ENCODE measurements at regions of chr15 and their contacts with region 1.

Region 1: DNA sequence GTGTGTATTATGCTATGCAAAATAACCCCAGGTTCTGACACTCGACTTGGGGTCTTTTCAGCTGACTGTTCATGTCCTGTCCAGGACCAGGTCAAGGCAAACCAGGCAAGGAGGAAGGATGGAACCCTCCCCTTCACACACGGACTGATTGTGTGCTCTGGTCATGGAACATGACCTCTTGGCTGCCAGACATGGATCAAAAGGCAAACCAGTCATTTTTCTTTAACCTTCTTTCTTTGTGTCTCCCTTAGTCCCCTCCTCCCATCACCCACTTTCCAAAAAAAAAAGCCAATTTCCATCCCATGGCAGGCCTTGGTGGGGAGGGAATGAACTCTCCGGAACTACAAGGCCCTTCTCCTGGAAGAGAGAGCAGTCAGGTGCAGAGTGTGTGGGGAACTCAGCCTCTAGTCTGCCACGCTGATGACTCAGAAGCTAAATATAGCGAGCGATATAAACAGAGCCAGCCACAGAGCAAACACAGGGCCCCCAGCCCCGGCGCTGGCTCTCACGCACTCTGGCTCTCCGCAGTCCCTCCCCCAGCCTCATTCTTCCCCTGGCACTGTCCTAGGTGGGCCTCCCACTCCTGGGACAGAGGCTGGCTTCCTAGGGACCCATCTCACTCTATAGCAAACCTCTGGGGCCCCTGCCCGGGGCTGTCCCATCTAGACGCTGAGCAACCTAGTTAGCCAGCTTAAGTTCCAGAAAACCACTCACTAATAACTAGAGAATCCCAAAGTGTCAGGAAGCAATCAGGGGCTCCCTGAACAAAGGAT is 10.0 kb downstream of the BMF start:
- DNase-seq: peak; percentile 87
- ATAC-seq: peak; percentile 95
- H3K4me3 Mint-ChIP-seq: peak overlapping the region; percentile 44
- H3K27ac Mint-ChIP-seq: peak overlapping the region; percentile 97
- H3K4me1 Mint-ChIP-seq: peaks cover 72% of the 10 kb centered on the region
- H3K27me3 Mint-ChIP-seq: peaks cover 3% of the 10 kb centered on the region
- CTCF ChIP-seq: no peak

Region 2: DNA sequence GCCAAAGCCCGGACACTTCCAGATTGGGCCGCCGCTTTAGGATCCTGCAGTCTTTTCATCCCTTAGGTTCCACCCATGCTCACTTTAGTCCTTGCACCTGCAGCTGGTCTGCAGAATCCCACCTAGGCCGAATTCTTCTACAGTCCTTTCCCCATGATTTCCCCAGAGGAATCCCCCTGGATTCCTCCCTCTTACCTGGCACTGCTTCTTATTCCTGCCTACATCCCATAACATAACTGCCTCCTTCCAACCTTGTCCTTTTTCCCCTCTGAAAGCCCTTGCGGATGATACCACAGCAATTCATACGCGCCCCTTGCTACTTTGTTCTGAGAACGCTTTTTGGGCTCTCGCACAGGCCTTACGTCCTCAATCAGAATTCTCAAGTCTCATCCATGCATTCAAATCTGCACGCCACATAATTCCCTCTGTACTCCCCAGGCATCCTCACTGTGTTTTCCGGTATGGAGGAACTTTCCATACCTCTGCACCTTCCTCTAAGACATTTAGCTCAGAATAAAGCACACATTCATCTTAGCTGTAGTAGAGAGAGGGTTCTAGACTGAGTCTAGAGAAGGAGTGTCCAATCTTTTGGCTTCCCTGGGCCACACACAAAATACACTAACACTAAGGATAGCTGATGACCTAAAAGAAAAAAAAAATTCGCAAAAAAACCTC is 164.1 kb before region 1 on chr15:
- CTCF ChIA-PET with region 1: no interaction called
- POLR2A ChIA-PET with region 1: no interaction called
- intact Hi-C with region 1: no loop called
- DNase-seq: peak; percentile 11
- ATAC-seq: no peak
- H3K4me3 Mint-ChIP-seq: peak overlapping the region; percentile 82
- H3K27ac Mint-ChIP-seq: peak overlapping the region; percentile 74
- H3K4me1 Mint-ChIP-seq: peaks cover 25% of the 10 kb centered on the region
- H3K27me3 Mint-ChIP-seq: peaks cover 6% of the 10 kb centered on the region
- CTCF ChIP-seq: no peak

Region 3: GRCh38 chr15:39987821-39988220 is 110.9 kb before region 1 on chr15:
- CTCF ChIA-PET with region 1: no interaction called
- POLR2A ChIA-PET with region 1: no interaction called
- intact Hi-C with region 1: no loop called
- DNase-seq: no peak
- ATAC-seq: no peak
- H3K4me3 Mint-ChIP-seq: no peak overlapping the region
- H3K27ac Mint-ChIP-seq: no peak overlapping the region
- H3K4me1 Mint-ChIP-seq: no peaks in the 10 kb centered on the region
- H3K27me3 Mint-ChIP-seq: no peaks in the 10 kb centered on the region
- CTCF ChIP-seq: no peak

Region 4: DNA sequence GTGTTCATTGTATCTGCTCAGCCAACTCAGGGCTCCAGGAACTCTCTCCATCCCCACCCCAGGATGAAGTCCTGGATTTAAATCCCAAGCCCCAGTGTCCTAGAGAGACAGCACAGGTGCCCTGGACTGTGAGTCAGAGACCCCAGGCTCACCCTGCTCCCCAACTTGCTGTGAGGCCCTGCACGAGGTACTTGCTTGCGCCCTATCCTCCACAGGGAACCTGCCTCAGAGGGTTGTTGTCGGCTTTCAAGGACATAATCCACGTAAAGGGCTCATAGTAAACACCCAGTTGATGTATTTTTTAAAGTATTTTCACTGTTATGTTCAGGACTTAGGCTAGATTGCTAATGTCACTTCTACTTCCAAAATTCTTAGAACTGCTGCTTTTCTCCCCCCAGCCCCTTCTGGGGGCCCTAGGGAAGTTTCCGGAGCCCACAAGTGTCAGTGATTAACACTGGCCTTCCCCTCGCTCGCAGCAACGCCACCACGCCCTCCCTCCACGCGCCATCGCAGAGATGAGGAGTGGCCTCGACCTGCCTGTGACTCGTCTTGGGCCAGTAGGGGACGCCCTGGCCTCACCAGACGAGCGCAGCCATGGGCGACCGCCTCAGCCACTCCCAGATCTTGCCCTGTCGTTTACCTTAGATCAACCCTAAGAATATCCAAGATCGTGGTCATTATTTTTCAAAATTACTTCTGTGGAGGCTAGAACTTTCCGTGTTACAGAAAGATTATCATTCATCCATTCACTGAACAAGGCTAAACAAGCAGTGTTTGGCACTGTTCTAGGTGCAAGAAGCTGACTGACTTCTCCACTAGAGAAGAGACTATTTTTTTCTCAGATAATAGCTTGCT is 53.7 kb before region 1 on chr15:
- CTCF ChIA-PET with region 1: interaction called, 198 read pairs
- POLR2A ChIA-PET with region 1: interaction called, 21 read pairs
- intact Hi-C with region 1: no loop called
- DNase-seq: peak; percentile 95
- ATAC-seq: peak; percentile 85
- H3K4me3 Mint-ChIP-seq: peak overlapping the region; percentile 9
- H3K27ac Mint-ChIP-seq: peak overlapping the region; percentile 85
- H3K4me1 Mint-ChIP-seq: peaks cover 85% of the 10 kb centered on the region
- H3K27me3 Mint-ChIP-seq: no peaks in the 10 kb centered on the region
- CTCF ChIP-seq: peak; percentile 96

Region 5: DNA sequence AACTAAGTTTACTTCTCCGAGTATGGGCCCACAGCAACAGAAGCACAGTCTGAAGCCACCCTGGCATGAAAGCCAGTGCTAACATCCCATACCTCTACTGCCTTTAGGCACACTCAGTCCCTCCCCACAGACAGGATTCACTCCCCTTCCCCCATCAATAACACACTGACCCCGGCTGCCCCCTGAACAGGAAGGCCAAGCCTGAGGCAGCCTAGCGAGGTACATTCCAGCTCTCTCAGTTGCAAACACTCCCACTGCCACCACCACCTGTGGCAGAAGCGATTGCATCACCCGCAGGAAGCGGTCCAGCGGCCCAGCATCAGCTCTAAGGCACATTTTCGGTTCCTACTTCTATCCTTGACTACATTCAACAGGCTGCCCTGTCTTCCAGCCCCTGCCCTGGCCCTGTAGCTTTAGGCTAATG is 17.0 kb after region 1 on chr15:
- CTCF ChIA-PET with region 1: interaction called, 99 read pairs
- POLR2A ChIA-PET with region 1: interaction called, 13 read pairs
- intact Hi-C with region 1: no loop called
- DNase-seq: peak; percentile 79
- ATAC-seq: peak; percentile 94
- H3K4me3 Mint-ChIP-seq: peak overlapping the region; percentile 5
- H3K27ac Mint-ChIP-seq: peak overlapping the region; percentile 83
- H3K4me1 Mint-ChIP-seq: peaks cover 12% of the 10 kb centered on the region
- H3K27me3 Mint-ChIP-seq: peaks cover 9% of the 10 kb centered on the region
- CTCF ChIP-seq: no peak

Region 6: DNA sequence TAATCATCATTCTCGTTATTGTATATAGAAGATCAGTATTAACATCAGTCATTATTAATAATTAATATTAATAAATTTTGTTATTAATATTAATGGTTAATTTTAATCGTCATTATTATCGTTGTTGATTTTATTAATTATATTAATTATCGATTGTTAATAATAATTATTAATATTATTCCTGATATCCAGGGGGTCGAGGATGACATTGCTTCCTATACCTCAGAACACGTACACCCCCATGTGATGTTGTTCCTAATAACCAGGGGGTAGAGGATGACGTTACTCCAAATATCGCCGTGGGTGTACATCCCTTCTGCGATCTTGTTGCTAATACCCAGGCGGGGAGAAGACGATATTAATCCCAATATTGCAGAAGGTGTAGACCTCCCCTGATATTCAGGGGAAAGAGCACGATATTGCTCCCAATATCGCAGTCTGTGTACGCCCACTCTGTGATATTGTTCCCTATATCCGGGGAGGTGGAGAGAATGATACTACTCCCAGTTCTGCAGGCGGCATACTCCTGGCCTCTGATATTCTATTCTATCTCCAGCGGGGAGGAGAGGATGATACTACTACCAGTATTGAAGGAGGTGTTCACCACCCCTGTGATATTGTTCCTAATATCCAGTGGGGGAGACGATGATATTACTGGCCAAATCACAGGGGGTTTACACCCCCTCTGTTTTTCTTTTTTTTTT is 32.3 kb after region 1 on chr15:
- CTCF ChIA-PET with region 1: no interaction called
- POLR2A ChIA-PET with region 1: no interaction called
- intact Hi-C with region 1: no loop called
- DNase-seq: no peak
- ATAC-seq: peak; percentile 12
- H3K4me3 Mint-ChIP-seq: no peak overlapping the region
- H3K27ac Mint-ChIP-seq: no peak overlapping the region
- H3K4me1 Mint-ChIP-seq: no peaks in the 10 kb centered on the region
- H3K27me3 Mint-ChIP-seq: peaks cover 3% of the 10 kb centered on the region
- CTCF ChIP-seq: no peak

Region 7: DNA sequence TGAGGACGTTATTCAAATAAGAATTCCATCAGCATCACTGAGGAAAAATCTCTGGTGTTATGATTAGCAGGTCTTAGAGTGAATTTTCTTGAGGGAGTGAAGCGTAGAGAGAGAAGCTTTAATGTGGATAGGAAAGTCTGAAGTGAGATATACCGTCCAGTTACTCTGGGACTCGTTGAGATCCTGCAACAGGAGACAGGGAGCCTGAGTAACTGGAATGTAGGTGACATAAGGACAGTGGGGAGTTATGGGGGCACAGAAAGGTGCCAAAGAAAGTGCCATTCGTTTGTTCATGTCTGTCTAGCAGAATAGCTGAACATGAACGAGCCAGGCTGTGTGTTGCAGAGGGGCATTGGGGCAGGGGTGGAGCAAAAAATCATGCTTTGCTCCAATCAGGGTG is 52.8 kb after region 1 on chr15:
- CTCF ChIA-PET with region 1: no interaction called
- POLR2A ChIA-PET with region 1: no interaction called
- intact Hi-C with region 1: no loop called
- DNase-seq: no peak
- ATAC-seq: no peak
- H3K4me3 Mint-ChIP-seq: no peak overlapping the region
- H3K27ac Mint-ChIP-seq: no peak overlapping the region
- H3K4me1 Mint-ChIP-seq: no peaks in the 10 kb centered on the region
- H3K27me3 Mint-ChIP-seq: no peaks in the 10 kb centered on the region
- CTCF ChIP-seq: no peak